SK-N-SH (cell line): ENCODE measurements at regions of chr1 and their contacts with region 1.

Region 1: GRCh38 chr1:210143465-210144062 is 89.0 kb upstream of the SERTAD4 start:
- DNase-seq: peak; percentile 51
- H3K4me3 ChIP-seq: no peak overlapping the region; a peak in 1 of 4 replicates
- H3K27ac ChIP-seq: no peak overlapping the region
- H3K4me1 ChIP-seq: peaks cover 0 to 6% of the 10 kb centered on the region in 2 experiments; a peak in 1 of 4 replicates
- H3K27me3 ChIP-seq: no peaks in the 10 kb centered on the region
- CTCF ChIP-seq: peak; percentile 89
- EP300 ChIP-seq: no peak
- RAD21 ChIP-seq: peak; percentile 93

Region 2: DNA sequence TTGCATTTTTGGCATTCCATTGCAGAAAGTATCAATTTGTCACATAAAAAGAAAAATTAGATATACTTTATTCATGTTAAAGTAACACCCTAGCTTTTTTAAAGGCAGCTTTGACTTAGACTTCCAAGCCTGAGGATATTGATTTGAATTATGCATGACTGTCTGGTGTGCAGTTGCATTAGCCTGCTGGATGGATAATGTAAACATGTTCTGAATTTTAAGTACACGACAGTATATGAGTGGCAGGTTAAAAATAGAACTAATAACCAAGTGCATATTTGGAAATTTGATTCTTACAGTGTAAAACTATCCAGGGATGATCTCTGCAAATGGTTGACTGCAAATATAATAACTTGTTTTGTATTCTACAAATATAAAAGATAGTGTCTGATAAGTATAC is 81.6 kb before region 1 on chr1:
- CTCF ChIA-PET with region 1: no interaction called
- POLR2A ChIA-PET with region 1: no interaction called
- DNase-seq: no peak
- H3K4me3 ChIP-seq: no peak overlapping the region
- H3K27ac ChIP-seq: peak overlapping the region in 1 of 2 experiments; percentile 50; a peak in 2 of 4 replicates
- H3K4me1 ChIP-seq: peaks cover 5 to 9% of the 10 kb centered on the region in 2 experiments; a peak in 2 of 4 replicates
- H3K27me3 ChIP-seq: no peaks in the 10 kb centered on the region
- CTCF ChIP-seq: no peak
- EP300 ChIP-seq: no peak
- RAD21 ChIP-seq: no peak

Region 3: DNA sequence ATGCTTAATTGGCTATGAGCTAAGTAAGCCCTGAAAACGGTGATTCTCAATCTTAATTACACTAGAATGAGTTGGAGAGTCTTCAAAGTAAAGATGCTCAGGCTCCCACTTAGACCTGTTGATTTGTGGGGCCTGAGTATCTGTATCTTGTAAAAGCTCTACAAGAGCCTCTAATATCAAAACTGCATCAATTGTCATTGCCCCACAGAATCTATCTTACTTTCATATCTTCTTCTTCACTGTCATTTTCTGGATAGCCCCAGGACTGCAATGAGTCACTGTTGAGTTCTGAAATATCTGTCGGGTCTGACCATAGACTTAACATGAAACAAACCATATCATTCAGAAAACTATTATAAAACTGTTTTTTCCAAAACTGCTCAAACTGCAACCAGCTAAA is 13.8 kb before region 1 on chr1:
- CTCF ChIA-PET with region 1: interaction called, 11 read pairs
- POLR2A ChIA-PET with region 1: no interaction called
- DNase-seq: no peak
- H3K4me3 ChIP-seq: no peak overlapping the region
- H3K27ac ChIP-seq: peak overlapping the region in 1 of 2 experiments; percentile 29; a peak in 1 of 4 replicates
- H3K4me1 ChIP-seq: peaks cover 12 to 17% of the 10 kb centered on the region in 2 experiments; a peak in 3 of 4 replicates
- H3K27me3 ChIP-seq: no peaks in the 10 kb centered on the region
- CTCF ChIP-seq: no peak
- EP300 ChIP-seq: 0 out of 4 replicates have a peak, but pooled peaks of 1 of the 2 experiments have one; percentile 12
- RAD21 ChIP-seq: no peak

Region 4: GRCh38 chr1:210159206-210159605 is 15.6 kb after region 1 on chr1:
- CTCF ChIA-PET with region 1: interaction called, 16 read pairs
- POLR2A ChIA-PET with region 1: no interaction called
- DNase-seq: no peak
- H3K4me3 ChIP-seq: no peak overlapping the region
- H3K27ac ChIP-seq: no peak overlapping the region
- H3K4me1 ChIP-seq: peaks cover 0 to 6% of the 10 kb centered on the region in 2 experiments; a peak in 1 of 4 replicates
- H3K27me3 ChIP-seq: no peaks in the 10 kb centered on the region
- CTCF ChIP-seq: no peak
- EP300 ChIP-seq: no peak
- RAD21 ChIP-seq: no peak

Region 5: GRCh38 chr1:210292231-210292871 is 148.8 kb after region 1 on chr1:
- CTCF ChIA-PET with region 1: interaction called, 25 read pairs
- POLR2A ChIA-PET with region 1: no interaction called
- DNase-seq: peak; percentile 80
- H3K4me3 ChIP-seq: peak overlapping the region; percentile 45 to 55
- H3K27ac ChIP-seq: peak overlapping the region; percentile 55 to 98; a peak in 3 of 4 replicates
- H3K4me1 ChIP-seq: peaks cover 23 to 43% of the 10 kb centered on the region in 2 experiments
- H3K27me3 ChIP-seq: no peaks in the 10 kb centered on the region
- CTCF ChIP-seq: peak; percentile 48
- EP300 ChIP-seq: no peak
- RAD21 ChIP-seq: no peak

Region 6: GRCh38 chr1:210301615-210302000 is 158.0 kb after region 1 on chr1:
- CTCF ChIA-PET with region 1: interaction called, 106 read pairs
- POLR2A ChIA-PET with region 1: no interaction called
- DNase-seq: no peak
- H3K4me3 ChIP-seq: no peak overlapping the region
- H3K27ac ChIP-seq: no peak overlapping the region
- H3K4me1 ChIP-seq: peaks cover 0 to 2% of the 10 kb centered on the region in 2 experiments; a peak in 1 of 4 replicates
- H3K27me3 ChIP-seq: no peaks in the 10 kb centered on the region
- CTCF ChIP-seq: no peak
- EP300 ChIP-seq: no peak
- RAD21 ChIP-seq: no peak

Region 7: GRCh38 chr1:210400043-210400840 is 256.7 kb after region 1 on chr1:
- CTCF ChIA-PET with region 1: interaction called, 11 read pairs
- POLR2A ChIA-PET with region 1: no interaction called
- DNase-seq: peak; percentile 73
- H3K4me3 ChIP-seq: no peak overlapping the region; a peak in 1 of 4 replicates
- H3K27ac ChIP-seq: no peak overlapping the region
- H3K4me1 ChIP-seq: peaks cover 0 to 1% of the 10 kb centered on the region in 2 experiments; a peak in 2 of 4 replicates
- H3K27me3 ChIP-seq: no peaks in the 10 kb centered on the region
- CTCF ChIP-seq: peak; percentile 93
- EP300 ChIP-seq: no peak
- RAD21 ChIP-seq: peak; percentile 88

Region 8: DNA sequence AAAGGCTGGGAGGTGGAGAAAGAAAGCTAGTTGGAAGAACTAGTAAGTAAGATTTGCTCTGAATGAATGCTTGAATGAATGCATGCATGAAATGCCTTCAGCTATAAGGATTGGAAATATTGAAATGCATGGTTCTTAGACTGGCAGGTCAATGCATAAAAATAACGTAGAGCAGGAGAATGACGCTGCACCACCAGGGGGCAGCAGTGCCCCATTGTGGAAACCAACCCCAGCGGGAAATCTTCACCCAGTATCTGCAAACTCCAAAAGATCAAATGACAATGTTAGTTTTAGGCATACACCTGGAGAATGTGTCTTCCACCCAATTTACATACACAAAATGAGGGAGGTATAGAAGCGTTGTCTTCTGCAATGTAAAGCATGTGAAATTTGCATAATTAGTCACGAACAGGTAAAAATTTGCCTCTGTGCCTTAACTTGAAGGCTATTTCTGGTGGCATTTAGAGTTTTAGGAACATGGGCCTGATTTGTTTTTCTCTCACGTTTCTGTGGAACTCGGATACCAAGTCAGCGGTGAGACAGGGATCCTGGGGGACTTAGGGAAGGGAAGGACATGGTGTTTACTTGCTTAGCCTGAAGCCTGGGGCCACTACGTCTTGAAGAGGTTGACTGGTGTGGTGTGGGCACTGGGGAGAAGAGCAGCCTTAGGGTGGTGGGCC is 263.8 kb after region 1 on chr1:
- CTCF ChIA-PET with region 1: interaction called, 11 read pairs
- POLR2A ChIA-PET with region 1: no interaction called
- DNase-seq: peak; percentile 70
- H3K4me3 ChIP-seq: no peak overlapping the region; a peak in 1 of 4 replicates
- H3K27ac ChIP-seq: no peak overlapping the region
- H3K4me1 ChIP-seq: no peaks in the 10 kb centered on the region
- H3K27me3 ChIP-seq: no peaks in the 10 kb centered on the region
- CTCF ChIP-seq: peak; percentile 98
- EP300 ChIP-seq: no peak
- RAD21 ChIP-seq: peak; percentile 95